Heart right ventricle (tissue), 16 donors: ENCODE measurements at regions of chr17 and their contacts with region 1.

Region 1: GRCh38 chr17:79789534-79790353 is 7.1 kb downstream of the CBX8 start:
- DNase-seq: peak in 1 of 2 donors; percentile 55
- ATAC-seq: peak; percentile 32 to 71 (median 56)
- H3K4me3 ChIP-seq: peak overlapping the region in 4 of 10 donors; percentile 10 to 30 (median 17)
- H3K27ac ChIP-seq: no peak overlapping the region
- H3K4me1 ChIP-seq: peaks cover 16 to 59% (median 50%) of the 10 kb centered on the region in 9 donors
- H3K27me3 ChIP-seq: peaks cover 25 to 97% (median 86%) of the 10 kb centered on the region in 7 donors
- CTCF ChIP-seq: peak; percentile 66 to 88 (median 83)

Region 2: GRCh38 chr17:79749156-79749815 is 40.5 kb before region 1 on chr17:
- intact Hi-C with region 1: loop called in 2 of 10 experiments (anchors 5 kb)
- DNase-seq: no peak
- ATAC-seq: no peak
- H3K4me3 ChIP-seq: no peak overlapping the region
- H3K27ac ChIP-seq: no peak overlapping the region
- H3K4me1 ChIP-seq: peaks cover 0 to 22% (median 11%) of the 10 kb centered on the region in 9 donors
- H3K27me3 ChIP-seq: peaks cover 19 to 94% (median 84%) of the 10 kb centered on the region in 7 donors
- CTCF ChIP-seq: no peak

Region 3: GRCh38 chr17:79915850-79916430 is 126.2 kb after region 1 on chr17:
- intact Hi-C with region 1: loop called in 7 of 10 experiments (anchors 5 to 10 kb)
- DNase-seq: peak; percentile 33 to 52
- ATAC-seq: peak in 5 of 8 donors; percentile 24 to 54 (median 39)
- H3K4me3 ChIP-seq: no peak overlapping the region
- H3K27ac ChIP-seq: no peak overlapping the region
- H3K4me1 ChIP-seq: peaks cover 0 to 37% (median 14%) of the 10 kb centered on the region in 9 donors
- H3K27me3 ChIP-seq: peaks cover 0 to 48% (median 32%) of the 10 kb centered on the region in 7 donors
- CTCF ChIP-seq: peak in 7 of 9 donors; percentile 32 to 56 (median 52)

Region 4: GRCh38 chr17:79923974-79924638 is 134.4 kb after region 1 on chr17:
- intact Hi-C with region 1: loop called in 7 of 10 experiments (anchors 5 to 10 kb)
- DNase-seq: no peak
- ATAC-seq: peak in 1 of 8 donors; percentile 32
- H3K4me3 ChIP-seq: no peak overlapping the region
- H3K27ac ChIP-seq: no peak overlapping the region
- H3K4me1 ChIP-seq: peaks cover 0 to 20% (median 11%) of the 10 kb centered on the region in 9 donors
- H3K27me3 ChIP-seq: peaks cover 8 to 88% (median 63%) of the 10 kb centered on the region in 7 donors
- CTCF ChIP-seq: peak in 7 of 9 donors; percentile 29 to 49 (median 37)

Region 5: DNA sequence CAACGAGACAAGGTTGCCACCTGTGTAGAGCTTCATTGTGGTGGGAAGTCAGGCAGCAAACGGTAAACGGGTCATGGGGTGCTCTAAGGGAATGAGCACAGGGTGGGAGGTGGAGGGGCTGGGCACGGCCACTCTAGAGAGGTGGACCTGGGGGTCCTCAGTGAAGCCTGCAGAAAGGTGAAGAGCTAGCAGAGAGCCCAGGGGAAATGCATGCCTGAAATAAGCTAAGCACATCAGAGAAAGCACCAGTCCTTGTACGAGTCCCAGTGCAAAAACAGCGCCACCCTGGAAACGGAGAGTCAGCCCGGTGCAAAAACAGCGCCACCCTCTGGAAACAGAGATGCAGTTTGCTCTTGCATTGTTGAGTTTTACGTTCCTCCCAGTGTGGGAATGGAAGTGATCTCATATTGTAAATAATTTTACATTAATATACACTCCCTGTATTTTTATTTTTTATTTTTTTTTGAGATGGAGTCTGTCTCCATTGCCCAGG is 180.9 kb after region 1 on chr17:
- intact Hi-C with region 1: loop called in 3 of 10 experiments (anchors 5 to 10 kb)
- DNase-seq: no peak
- ATAC-seq: peak in 1 of 8 donors; percentile 18
- H3K4me3 ChIP-seq: no peak overlapping the region
- H3K27ac ChIP-seq: no peak overlapping the region
- H3K4me1 ChIP-seq: no peaks in the 10 kb centered on the region
- H3K27me3 ChIP-seq: no peaks in the 10 kb centered on the region
- CTCF ChIP-seq: peak in 8 of 9 donors; percentile 15 to 48 (median 44)